ENCODE measurements at regions of chr11 and their contacts with region 1.

Region 1: DNA sequence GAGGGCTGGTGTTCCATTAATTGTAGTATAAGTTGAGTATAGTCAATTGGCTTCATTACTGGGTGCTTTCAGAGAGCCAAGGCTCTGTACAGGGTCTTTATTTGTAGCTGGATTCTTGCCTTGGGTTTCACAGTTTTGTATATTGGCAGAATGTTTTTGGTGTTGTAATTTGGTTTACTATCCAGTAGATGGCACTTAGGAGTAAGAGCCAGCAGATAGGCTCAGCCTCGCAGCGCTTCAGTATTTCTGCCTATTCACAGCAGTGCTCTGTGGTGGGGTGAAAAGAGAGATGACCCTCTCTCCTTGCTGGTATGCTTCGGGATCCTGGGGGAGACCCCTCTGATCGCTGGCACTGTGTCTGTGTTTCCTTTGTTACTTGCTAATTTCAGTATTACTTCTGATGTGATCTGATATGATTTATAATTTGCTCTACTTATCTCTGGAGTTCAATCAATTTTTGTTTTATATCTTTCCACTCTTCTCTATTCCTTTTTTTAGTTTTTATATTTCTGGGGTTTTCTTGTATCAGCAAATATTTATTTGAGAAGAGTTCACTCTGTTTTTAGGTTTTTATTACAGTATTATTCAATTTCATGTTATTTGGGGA is 52.2 kb downstream of the ANO5 start:
- DNase-seq: peak; percentile 20
- ATAC-seq: peak; percentile 94
- H3K4me3 ChIP-seq: no peak overlapping the region
- H3K27ac ChIP-seq: no peak overlapping the region
- H3K4me1 ChIP-seq: no peaks in the 10 kb centered on the region
- H3K27me3 ChIP-seq: no peaks in the 10 kb centered on the region
- CTCF ChIP-seq: peak; percentile 63
- EP300 ChIP-seq: no peak
- POLR2A ChIP-seq: no peak
- RAD21 ChIP-seq: no peak

Region 2: GRCh38 chr11:22304337-22304961 is 59.4 kb after region 1 on chr11:
- CTCF ChIA-PET with region 1: interaction called, 4 read pairs
- POLR2A ChIA-PET with region 1: no interaction called
- in situ Hi-C with region 1: loop called (anchors 5 kb)
- intact Hi-C with region 1: loop called (anchors 1 kb)
- DNase-seq: peak; percentile 12
- ATAC-seq: 0 out of 3 replicates have a peak, but pooled peaks have one; percentile 33
- H3K4me3 ChIP-seq: no peak overlapping the region
- H3K27ac ChIP-seq: no peak overlapping the region
- H3K4me1 ChIP-seq: no peaks in the 10 kb centered on the region
- H3K27me3 ChIP-seq: no peaks in the 10 kb centered on the region
- CTCF ChIP-seq: peak; percentile 59
- EP300 ChIP-seq: no peak
- POLR2A ChIP-seq: no peak
- RAD21 ChIP-seq: no peak

Region 3: DNA sequence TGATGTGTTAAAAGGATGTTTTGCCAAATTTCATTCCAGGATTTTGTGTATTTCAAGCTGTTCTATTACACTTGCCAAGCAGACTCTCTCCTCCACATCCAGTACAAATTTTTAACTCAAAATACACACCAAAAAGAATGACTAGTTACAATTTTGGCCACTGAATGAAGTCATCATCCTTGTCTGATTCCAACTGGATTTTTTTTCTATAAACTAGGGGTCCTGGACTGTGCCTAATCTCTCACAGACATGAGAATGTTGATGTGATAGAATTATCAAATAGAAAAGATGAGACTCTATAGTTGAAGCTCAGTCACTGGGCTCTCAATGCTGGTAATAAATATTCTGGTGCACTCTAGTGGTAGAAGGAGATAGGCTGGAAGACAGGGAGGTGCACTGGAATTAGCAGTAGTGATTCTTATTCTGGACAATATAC is 294.8 kb after region 1 on chr11:
- CTCF ChIA-PET with region 1: no interaction called
- POLR2A ChIA-PET with region 1: no interaction called
- in situ Hi-C with region 1: no loop called
- intact Hi-C with region 1: loop called (anchors 10 kb)
- DNase-seq: peak; percentile 9
- ATAC-seq: peak; percentile 76
- H3K4me3 ChIP-seq: no peak overlapping the region
- H3K27ac ChIP-seq: no peak overlapping the region
- H3K4me1 ChIP-seq: no peaks in the 10 kb centered on the region
- H3K27me3 ChIP-seq: no peaks in the 10 kb centered on the region
- CTCF ChIP-seq: peak; percentile 52
- EP300 ChIP-seq: no peak
- POLR2A ChIP-seq: no peak
- RAD21 ChIP-seq: no peak

Measured in HepG2 (cell line).